CD14-positive monocyte (primary cell): ENCODE measurements at regions of chr16 and their contacts with region 1.

Region 1: DNA sequence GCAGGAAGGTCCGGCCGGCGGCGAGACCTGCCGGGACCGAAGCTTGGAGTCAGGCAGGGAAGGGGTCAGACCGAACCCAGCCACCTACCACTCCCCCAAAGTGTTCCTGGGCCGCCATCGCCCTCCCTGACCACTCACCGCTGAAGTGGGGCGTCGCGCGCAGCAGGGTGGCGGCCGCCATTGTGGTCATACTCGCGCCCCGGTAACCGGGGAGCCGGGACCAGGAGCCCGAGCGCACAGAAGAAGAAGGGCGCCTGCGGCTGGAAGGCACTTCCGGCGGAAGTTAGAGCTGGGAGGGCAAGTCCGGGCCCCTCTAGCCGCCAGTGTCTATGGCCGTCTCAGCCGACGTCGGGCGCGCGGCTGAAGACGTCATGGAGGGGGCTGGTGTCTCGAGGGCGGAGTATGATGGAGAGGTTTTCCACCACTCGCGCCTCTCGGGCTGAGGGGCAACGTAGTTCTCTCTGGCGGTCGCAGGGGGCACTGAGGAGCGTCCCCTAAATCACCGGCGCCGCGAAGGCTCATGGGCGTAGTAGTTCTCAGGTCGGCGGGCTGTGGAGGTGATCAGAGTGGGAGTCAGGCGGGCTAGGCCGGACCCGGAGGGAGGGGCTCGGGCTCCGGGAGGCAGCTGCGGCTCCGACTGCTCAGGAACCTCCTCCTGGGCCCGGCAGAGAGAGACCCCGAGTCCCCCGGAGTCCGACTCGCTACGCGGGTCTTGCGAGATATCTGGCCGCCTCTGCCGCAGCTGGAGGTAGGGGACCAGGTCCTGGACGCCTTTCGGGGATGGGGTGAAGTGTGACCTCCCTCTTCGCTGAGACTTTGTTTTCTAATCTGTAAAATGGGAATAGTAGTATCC is at the start of gene TUFM:
- DNase-seq: peak; percentile 97 to 99 (median 98)
- H3K4me3 ChIP-seq: peak within 1 kb of the TSS; percentile 77 to 93 (median 86)
- H3K4me3 Mint-ChIP-seq: peak within 1 kb of the TSS; percentile 91 to 95
- H3K27ac ChIP-seq: peak within 1 kb of the TSS; percentile 67 to 86
- H3K27ac Mint-ChIP-seq: peak within 1 kb of the TSS; percentile 92 to 98 (median 94)
- H3K4me1 ChIP-seq: peaks cover 17 to 23% of the 10 kb centered on the region in 2 donors
- H3K4me1 Mint-ChIP-seq: peaks cover 20% of the 10 kb centered on the region
- H3K27me3 ChIP-seq: no peaks in the 10 kb centered on the region
- H3K27me3 Mint-ChIP-seq: no peaks in the 10 kb centered on the region
- CTCF ChIP-seq: peak; percentile 65
- polyA plus RNA-seq, gene TUFM: 146 to 157 (median 148) TPM

Region 2: GRCh38 chr16:28553776-28554633 is 292.3 kb before region 1 on chr16 and contains the start of gene SGF29:
- intact Hi-C with region 1: loop called in 1 of 2 experiments (anchors 10 kb)
- DNase-seq: peak; percentile 91 to 92 (median 92)
- H3K4me3 ChIP-seq: peak within 1 kb of the TSS; percentile 56 to 84 (median 71)
- H3K4me3 Mint-ChIP-seq: peak within 1 kb of the TSS; percentile 87 to 90
- H3K27ac ChIP-seq: peak within 1 kb of the TSS; percentile 95 to 99
- H3K27ac Mint-ChIP-seq: peak within 1 kb of the TSS; percentile 95 to 99 (median 98)
- H3K4me1 ChIP-seq: peaks cover 16 to 31% of the 10 kb centered on the region in 2 donors
- H3K4me1 Mint-ChIP-seq: peaks cover 28% of the 10 kb centered on the region
- H3K27me3 ChIP-seq: no peaks in the 10 kb centered on the region
- H3K27me3 Mint-ChIP-seq: peaks cover 0 to 1% (median 1%) of the 10 kb centered on the region in 3 donors
- CTCF ChIP-seq: peak; percentile 12
- polyA plus RNA-seq, gene SGF29: 14.0 to 24.3 (median 18.8) TPM

Region 3: DNA sequence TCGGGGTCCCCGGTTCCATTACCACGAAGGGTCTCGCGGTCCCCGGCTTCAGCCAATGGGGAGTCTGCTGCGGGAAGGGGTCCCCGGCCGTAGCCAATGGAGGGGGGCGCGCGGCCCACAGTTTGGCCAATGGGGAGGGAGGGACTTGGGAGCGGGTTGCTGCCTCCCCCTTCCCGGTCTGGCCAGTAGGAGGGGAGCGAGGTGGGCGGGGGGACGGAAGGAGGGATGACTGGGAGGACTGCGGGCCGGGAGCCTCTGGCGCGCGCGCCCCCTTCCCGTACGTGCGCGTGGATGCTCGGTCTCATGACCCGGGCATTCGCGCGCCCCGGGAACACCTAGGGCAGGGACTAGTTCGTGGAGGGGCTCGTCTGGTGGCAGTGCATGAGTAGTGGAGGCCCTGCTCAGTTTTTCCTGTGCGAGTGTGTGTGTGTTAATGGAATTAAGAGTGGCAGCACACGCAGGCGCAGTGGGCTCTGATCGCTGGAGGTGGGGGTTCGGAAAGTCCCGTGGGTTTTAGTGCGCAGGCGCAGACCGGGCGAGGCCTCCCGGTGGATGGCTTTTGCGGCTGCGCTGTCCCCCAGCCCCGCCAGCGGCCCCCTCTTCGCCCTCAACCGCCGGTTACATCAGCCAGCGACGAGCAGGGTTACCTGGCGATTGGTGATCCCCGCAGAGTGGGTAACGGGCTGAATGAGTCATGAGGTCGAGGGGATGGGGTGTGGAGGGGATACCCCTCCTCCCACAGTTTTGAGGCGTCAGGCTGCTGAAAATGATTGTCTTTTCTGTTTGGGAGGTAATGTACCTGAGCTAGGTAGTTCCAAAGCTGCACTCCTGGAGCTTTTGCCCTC is 22.2 kb before region 1 on chr16:
- intact Hi-C with region 1: loop called in 1 of 2 experiments (anchors 2 kb)
- DNase-seq: peak; percentile 91 to 97 (median 97)
- H3K4me3 ChIP-seq: peak overlapping the region; percentile 58 to 94 (median 84)
- H3K4me3 Mint-ChIP-seq: peak overlapping the region; percentile 95 to 98
- H3K27ac ChIP-seq: peak overlapping the region; percentile 87 to 97
- H3K27ac Mint-ChIP-seq: peak overlapping the region; percentile 98 to 99 (median 99)
- H3K4me1 ChIP-seq: peaks cover 30 to 37% of the 10 kb centered on the region in 2 donors
- H3K4me1 Mint-ChIP-seq: peaks cover 24% of the 10 kb centered on the region
- H3K27me3 ChIP-seq: no peaks in the 10 kb centered on the region
- H3K27me3 Mint-ChIP-seq: peaks cover 0 to 1% (median 0%) of the 10 kb centered on the region in 3 donors
- CTCF ChIP-seq: peak; percentile 19

Region 4: DNA sequence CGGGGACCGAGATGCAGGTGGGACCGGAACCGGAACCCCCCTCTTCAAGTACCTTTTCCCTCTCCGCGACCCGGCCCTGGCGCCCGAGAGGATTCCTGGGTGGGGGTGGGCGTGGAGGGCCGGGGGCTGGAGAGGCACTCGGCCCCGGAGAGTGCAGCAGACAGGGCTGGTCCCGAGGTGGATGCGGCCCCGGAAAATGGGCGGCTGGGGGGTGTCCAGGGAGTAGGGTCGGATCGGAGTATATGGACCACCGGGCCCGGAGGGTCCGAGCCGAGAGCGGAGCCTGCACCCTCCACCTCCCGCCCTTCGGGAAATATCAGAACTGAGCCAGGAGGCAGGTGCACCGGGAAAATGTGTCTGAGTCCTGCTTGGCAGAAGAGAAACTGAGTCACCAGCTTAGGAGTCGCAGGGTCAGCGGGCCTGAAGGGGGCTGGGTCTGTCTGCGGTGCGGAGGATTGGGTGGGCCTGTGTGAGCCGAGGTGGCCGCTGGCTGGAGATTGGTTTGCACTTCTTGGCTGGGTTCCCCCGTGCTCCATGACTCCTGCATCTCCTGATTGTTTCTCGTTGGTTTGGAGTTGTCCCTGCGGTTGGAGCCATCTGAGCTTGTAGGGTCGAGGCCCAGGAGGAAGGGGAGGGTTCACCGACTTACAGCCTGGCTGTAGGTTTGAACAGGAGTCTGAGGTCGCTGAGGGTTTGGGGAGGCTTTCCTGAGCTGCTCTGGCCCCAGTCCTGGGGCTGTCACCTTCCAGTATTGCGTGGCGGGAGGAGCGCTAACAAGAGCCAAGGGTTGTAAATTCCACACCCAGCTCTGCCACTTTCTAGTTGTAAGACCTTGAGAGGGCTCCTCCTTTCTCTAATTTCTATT is 17.9 kb after region 1 on chr16:
- intact Hi-C with region 1: loop called in 1 of 2 experiments (anchors 1 kb)
- DNase-seq: no peak
- H3K4me3 ChIP-seq: peak overlapping the region; percentile 66 to 100 (median 97)
- H3K4me3 Mint-ChIP-seq: peak overlapping the region; percentile 93 to 98
- H3K27ac ChIP-seq: peak overlapping the region; percentile 88 to 96
- H3K27ac Mint-ChIP-seq: peak overlapping the region; percentile 91 to 98 (median 96)
- H3K4me1 ChIP-seq: peaks cover 19 to 26% of the 10 kb centered on the region in 2 donors
- H3K4me1 Mint-ChIP-seq: peaks cover 20% of the 10 kb centered on the region
- H3K27me3 ChIP-seq: no peaks in the 10 kb centered on the region
- H3K27me3 Mint-ChIP-seq: no peaks in the 10 kb centered on the region
- CTCF ChIP-seq: no peak

Region 5: GRCh38 chr16:28924732-28925385 is 78.6 kb after region 1 on chr16 and contains the start of gene RABEP2:
- intact Hi-C with region 1: loop called in 1 of 2 experiments (anchors 10 kb)
- DNase-seq: peak; percentile 81 to 86 (median 84)
- H3K4me3 ChIP-seq: peak within 1 kb of the TSS; percentile 70 to 96 (median 79)
- H3K4me3 Mint-ChIP-seq: peak within 1 kb of the TSS; percentile 94 to 97
- H3K27ac ChIP-seq: peak within 1 kb of the TSS; percentile 90 to 95
- H3K27ac Mint-ChIP-seq: peak within 1 kb of the TSS; percentile 91 to 97 (median 94)
- H3K4me1 ChIP-seq: peaks cover 11 to 17% of the 10 kb centered on the region in 2 donors
- H3K4me1 Mint-ChIP-seq: peaks cover 18% of the 10 kb centered on the region
- H3K27me3 ChIP-seq: no peaks in the 10 kb centered on the region
- H3K27me3 Mint-ChIP-seq: peaks cover 0 to 7% (median 0%) of the 10 kb centered on the region in 3 donors
- CTCF ChIP-seq: no peak
- polyA plus RNA-seq, gene RABEP2: 1.9 to 21.6 (median 2.5) TPM

Region 6: DNA sequence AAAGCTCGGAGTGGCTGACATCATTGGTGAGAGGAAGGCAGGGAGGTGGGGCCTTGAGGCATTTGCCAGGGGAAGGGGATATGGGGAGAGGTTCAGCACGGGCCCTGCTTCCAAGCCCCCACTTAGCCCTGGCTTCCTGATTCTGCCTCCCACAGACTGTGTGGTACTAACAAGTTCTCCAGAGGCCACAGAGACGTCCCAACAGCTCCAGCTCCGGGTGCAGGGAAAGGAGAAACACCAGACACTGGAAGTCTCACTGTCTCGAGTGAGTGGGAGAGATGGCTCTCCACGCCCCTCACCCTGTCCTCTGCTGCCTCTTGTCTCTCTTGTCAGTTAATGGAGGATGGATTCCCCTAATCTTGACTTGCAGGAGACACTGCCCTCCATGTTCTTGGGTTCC is 112.5 kb after region 1 on chr16:
- intact Hi-C with region 1: no loop called
- DNase-seq: no peak
- H3K4me3 ChIP-seq: no peak overlapping the region
- H3K4me3 Mint-ChIP-seq: no peak overlapping the region
- H3K27ac ChIP-seq: no peak overlapping the region
- H3K27ac Mint-ChIP-seq: peak overlapping the region in 2 of 7 donors; percentile 26 to 53
- H3K4me1 ChIP-seq: no peaks in the 10 kb centered on the region
- H3K4me1 Mint-ChIP-seq: no peaks in the 10 kb centered on the region
- H3K27me3 ChIP-seq: no peaks in the 10 kb centered on the region
- H3K27me3 Mint-ChIP-seq: no peaks in the 10 kb centered on the region
- CTCF ChIP-seq: no peak